Right ventricle myocardium inferior (tissue), 1 donor: ENCODE measurements at regions of chr6 and their contacts with region 1.

Region 1: GRCh38 chr6:47502920-47503319 is 25.3 kb downstream of the CD2AP start:
- DNase-seq: no peak
- ATAC-seq: no peak

Region 2: GRCh38 chr6:47376930-47377329 is 126.0 kb before region 1 on chr6:
- intact Hi-C with region 1: no loop called
- DNase-seq: no peak
- ATAC-seq: no peak

Region 3: DNA sequence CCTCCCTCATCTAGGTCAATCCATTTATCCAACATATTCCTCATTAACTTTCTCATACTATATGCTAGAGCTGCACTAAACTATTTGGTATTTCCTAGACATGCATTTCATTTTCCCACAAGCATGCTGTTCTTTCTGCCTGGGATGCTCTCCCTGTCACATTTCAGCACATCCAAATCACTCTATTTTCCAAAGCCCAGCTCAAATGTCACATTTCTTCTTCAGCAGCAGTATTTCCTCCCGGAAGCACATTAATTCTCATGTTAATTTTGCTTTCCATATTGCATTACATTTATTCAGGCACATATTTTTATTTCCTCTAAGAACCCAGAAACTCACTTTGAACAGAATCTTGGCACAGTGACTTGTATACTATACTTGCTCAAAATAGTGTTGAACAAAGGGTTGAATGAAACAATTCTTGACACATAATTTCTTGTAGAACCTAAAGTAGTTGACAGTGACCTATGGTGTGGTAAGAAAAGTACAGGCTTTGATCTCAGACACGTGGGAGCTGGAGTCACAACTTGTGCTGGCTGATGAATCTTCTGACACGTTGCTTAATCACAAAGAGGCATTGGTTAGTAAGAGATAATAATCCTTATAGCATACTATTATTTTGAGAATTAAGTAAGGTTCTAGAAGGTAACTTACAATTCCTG is 56.1 kb before region 1 on chr6:
- intact Hi-C with region 1: no loop called
- DNase-seq: no peak
- ATAC-seq: no peak

Region 4: GRCh38 chr6:47535316-47536225 is 32.7 kb after region 1 on chr6:
- intact Hi-C with region 1: loop called (anchors 5 kb)
- DNase-seq: no peak
- ATAC-seq: no peak